Endothelial cell of umbilical vein (primary cell): ENCODE measurements at regions of chr1 and their contacts with region 1.

Region 1: DNA sequence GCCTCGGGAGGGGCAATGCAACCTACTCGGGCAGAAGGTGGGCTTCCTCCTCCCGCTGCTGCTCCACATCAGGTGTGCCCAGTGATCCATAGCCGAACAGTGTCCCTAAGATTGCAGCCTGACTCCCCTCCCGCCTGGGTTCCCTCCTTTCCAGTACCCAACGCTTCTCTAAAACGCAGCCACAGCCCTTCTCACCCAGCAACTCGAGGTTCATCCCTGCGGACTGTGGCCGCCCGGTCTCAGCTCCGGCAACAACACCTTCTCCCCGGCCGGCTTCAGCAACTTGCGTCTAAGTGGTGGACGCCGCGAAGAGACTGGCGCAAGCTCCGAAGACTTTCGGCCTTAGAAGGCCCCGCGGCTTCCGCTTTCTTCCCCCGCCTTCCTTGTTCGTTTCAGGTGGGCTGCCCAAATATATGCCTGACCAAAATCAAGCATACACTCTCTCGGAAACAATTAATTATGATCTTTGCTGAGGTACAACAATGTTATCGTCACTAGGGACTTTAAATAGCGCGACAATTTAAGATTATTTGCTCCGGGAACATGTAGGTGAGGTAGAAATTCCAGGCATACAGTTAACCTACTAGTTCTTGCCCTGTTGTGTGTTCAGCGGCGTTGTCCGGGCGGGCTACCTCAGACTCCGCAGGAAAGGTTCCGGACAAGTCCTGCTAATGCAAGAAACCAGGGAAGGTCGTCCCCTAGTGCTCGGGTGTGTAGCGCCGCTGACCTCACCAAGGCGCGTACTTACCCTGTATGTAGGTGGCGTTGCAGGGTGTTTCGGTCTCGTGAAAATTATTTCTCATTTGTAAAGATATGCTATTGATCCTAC is at the start of gene RBBP5:
- DNase-seq: peak; percentile 98
- H3K4me3 ChIP-seq: peak within 1 kb of the TSS; percentile 52 to 90 (median 72)
- H3K27ac ChIP-seq: peak within 1 kb of the TSS; percentile 91
- H3K4me1 ChIP-seq: peaks cover 12% of the 10 kb centered on the region
- H3K27me3 ChIP-seq: no peaks in the 10 kb centered on the region
- CTCF ChIP-seq: peak; percentile 71 to 77
- POLR2A ChIP-seq: peak; percentile 85
- total RNA-seq, gene RBBP5: 14.2 and 15.6 TPM in 2 replicates

Region 2: DNA sequence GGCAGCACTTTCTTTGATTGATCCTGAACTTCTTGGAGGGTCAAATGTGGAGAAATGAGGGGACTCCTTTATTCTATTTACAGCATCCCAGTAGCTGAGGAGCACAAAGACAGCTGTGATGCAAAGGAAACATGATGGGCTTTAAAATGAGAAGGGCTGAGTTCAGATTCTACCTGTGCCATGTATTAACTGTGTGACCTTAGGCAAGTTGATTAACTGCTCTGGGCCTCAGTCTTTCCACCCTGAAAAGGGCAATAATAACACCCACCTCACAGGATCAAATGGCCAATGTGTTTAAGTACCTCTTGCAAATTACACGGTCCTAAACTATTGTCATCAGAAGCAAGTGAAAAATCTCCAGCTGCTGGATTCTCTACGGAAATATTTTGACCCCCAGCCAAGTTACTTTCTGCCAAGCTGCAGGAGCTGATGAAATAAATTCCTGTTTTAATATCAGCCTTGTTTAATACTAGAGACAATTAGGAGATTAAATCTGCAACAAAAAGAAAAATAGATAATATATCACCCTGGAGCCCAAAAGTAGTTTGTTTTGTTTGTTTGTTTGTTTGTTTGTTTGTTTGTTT is 53.3 kb before region 1 on chr1:
- CTCF ChIA-PET with region 1: no interaction called
- POLR2A ChIA-PET with region 1: no interaction called
- dilution Hi-C with region 1: no loop called
- intact Hi-C with region 1: no loop called
- DNase-seq: no peak
- H3K4me3 ChIP-seq: no peak overlapping the region
- H3K27ac ChIP-seq: no peak overlapping the region
- H3K4me1 ChIP-seq: no peaks in the 10 kb centered on the region
- H3K27me3 ChIP-seq: no peaks in the 10 kb centered on the region
- CTCF ChIP-seq: no peak
- POLR2A ChIP-seq: no peak

Region 3: GRCh38 chr1:205172729-205173366 is 51.0 kb after region 1 on chr1:
- CTCF ChIA-PET with region 1: interaction called, 3 read pairs
- POLR2A ChIA-PET with region 1: no interaction called
- dilution Hi-C with region 1: no loop called
- intact Hi-C with region 1: loop called (anchors 1 kb)
- DNase-seq: peak; percentile 61
- H3K4me3 ChIP-seq: no peak overlapping the region
- H3K27ac ChIP-seq: no peak overlapping the region
- H3K4me1 ChIP-seq: peaks cover 14% of the 10 kb centered on the region
- H3K27me3 ChIP-seq: no peaks in the 10 kb centered on the region
- CTCF ChIP-seq: no peak
- POLR2A ChIP-seq: no peak

Region 4: DNA sequence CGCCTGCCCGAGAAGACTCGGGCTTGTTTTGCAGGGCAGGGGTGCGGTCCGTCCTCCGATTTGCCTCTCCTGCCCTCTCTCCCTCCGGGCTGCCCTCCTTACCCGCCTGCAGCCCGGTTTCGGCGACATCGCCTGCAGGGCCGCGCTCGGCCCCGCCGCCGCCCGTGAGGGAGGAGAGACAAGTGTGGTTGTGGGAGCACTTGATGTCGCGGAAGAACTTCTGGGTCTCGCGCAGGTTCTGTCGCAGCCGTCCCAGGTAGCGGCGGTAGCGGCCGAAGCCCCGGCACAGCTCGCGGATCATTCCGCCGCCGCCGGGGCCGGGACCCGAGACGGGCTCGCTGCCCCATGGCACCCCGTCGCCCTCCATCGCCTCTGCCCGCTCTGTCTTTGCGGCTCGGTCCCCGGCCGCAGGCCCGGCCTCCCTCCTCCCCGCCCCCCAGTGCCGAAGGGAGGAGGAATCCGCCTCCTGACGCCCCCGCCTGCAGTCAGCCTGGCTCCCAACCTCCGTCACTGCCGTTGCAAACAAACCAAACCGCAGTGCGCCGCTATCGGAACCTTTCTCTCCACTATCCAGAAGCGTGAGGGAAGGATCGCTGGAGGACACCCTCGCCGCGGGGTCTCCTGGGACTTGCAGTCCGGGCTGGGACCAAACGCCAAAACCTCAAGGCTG is 89.4 kb after region 1 on chr1 and contains the start of gene DSTYK:
- CTCF ChIA-PET with region 1: no interaction called
- POLR2A ChIA-PET with region 1: no interaction called
- dilution Hi-C with region 1: no loop called
- intact Hi-C with region 1: loop called (anchors 1 kb)
- DNase-seq: peak; percentile 95
- H3K4me3 ChIP-seq: peak within 1 kb of the TSS; percentile 81 to 90 (median 89)
- H3K27ac ChIP-seq: peak within 1 kb of the TSS; percentile 14
- H3K4me1 ChIP-seq: peaks cover 7% of the 10 kb centered on the region
- H3K27me3 ChIP-seq: peaks cover 9 to 15% of the 10 kb centered on the region in 2 experiments
- CTCF ChIP-seq: no peak
- POLR2A ChIP-seq: peak; percentile 54
- total RNA-seq, gene DSTYK: 8.1 and 8.7 TPM in 2 replicates

Region 5: DNA sequence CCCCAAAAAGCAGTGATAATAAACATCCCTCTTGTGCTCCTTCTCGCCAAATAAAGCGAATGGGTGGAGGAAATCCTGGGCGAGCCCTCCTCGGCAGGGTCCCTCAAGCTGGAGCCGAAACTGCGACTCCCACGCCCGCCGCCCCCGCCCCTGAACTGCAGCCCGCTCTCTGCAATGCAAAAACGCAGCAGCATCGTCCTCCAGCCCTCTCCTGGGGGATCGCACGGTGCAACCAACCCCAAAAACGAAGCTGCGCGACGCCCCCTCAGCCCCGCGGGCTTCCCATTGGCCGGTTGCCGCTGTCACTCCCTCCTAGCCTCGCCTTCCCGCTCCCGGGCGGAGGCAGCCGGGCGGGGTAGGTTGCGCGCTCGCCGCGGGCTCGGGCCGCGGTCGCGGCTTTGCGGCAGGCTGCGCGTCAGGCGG is 105.7 kb after region 1 on chr1 and contains the start of gene TMCC2:
- CTCF ChIA-PET with region 1: interaction called, 14 read pairs
- POLR2A ChIA-PET with region 1: no interaction called
- dilution Hi-C with region 1: no loop called
- intact Hi-C with region 1: loop called (anchors 1 kb)
- DNase-seq: peak; percentile 81
- H3K4me3 ChIP-seq: peak within 1 kb of the TSS; percentile 49 to 64 (median 60)
- H3K27ac ChIP-seq: no peak within 1 kb of the TSS
- H3K4me1 ChIP-seq: peaks cover 17% of the 10 kb centered on the region
- H3K27me3 ChIP-seq: peaks cover 17 to 36% of the 10 kb centered on the region in 2 experiments
- CTCF ChIP-seq: peak in 1 of 2 donors; percentile 6
- POLR2A ChIP-seq: no peak
- total RNA-seq, gene TMCC2: 2.0 and 2.1 TPM in 2 replicates

Region 6: GRCh38 chr1:205300886-205301821 is 179.3 kb after region 1 on chr1:
- CTCF ChIA-PET with region 1: no interaction called
- POLR2A ChIA-PET with region 1: no interaction called
- dilution Hi-C with region 1: no loop called
- intact Hi-C with region 1: no loop called
- DNase-seq: peak; percentile 62
- H3K4me3 ChIP-seq: no peak overlapping the region
- H3K27ac ChIP-seq: no peak overlapping the region
- H3K4me1 ChIP-seq: peaks cover 17% of the 10 kb centered on the region
- H3K27me3 ChIP-seq: no peaks in the 10 kb centered on the region
- CTCF ChIP-seq: no peak
- POLR2A ChIP-seq: no peak

Region 7: DNA sequence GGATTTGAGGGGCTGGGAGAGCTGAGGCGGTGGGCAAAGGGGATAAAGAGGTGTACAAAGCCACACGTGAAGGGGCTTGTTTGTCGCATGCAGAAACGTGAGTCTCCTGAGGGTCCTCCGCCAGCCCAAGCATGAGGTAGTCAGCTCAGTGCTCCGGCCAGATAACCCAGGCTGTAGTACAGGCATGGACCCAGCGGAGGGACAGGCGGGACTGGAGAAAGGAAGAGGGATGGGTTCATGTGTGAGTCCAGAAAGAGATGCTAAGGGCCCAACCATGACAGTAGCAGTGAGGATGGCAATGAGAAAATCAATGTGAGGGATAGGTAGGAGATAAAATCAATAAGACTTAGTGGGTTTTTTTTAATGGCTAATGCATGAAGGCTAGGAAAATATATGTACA is 523.6 kb after region 1 on chr1:
- CTCF ChIA-PET with region 1: no interaction called
- POLR2A ChIA-PET with region 1: no interaction called
- dilution Hi-C with region 1: no loop called
- intact Hi-C with region 1: no loop called
- DNase-seq: no peak
- H3K4me3 ChIP-seq: no peak overlapping the region
- H3K27ac ChIP-seq: no peak overlapping the region
- H3K4me1 ChIP-seq: no peaks in the 10 kb centered on the region
- H3K27me3 ChIP-seq: no peaks in the 10 kb centered on the region
- CTCF ChIP-seq: no peak
- POLR2A ChIP-seq: no peak

Region 8: DNA sequence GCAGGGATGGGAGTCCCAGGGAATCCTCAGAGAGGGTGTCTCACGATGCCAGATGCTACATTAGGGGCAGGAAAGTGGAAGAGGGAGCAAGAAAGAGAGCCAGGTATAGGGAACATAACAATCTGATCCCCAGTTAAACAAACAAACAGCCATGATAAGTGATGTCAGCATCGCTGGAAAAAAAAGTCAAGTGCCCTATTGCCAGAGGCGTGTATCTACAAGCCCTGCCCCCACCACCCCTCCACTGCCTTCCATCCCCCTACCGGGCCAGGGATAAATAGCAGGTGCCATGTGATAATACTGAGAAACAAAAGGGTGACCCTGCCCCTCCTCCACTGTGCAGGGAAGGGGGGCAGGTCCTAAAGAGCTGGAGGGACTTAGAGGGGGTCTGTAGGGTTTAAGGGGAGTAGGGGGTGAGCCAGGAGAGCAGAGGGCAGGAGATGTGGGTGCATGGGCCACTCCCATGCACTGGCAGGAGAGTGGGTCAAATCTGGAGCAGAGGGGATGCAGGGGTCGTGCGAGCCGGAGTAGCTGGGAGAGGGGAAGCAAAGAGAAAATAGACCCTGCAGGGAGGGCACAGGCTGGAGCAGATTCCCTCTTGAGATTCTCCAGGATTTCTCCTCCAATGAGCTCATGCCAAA is 817.9 kb after region 1 on chr1:
- CTCF ChIA-PET with region 1: no interaction called
- POLR2A ChIA-PET with region 1: no interaction called
- dilution Hi-C with region 1: no loop called
- intact Hi-C with region 1: no loop called
- DNase-seq: no peak
- H3K4me3 ChIP-seq: no peak overlapping the region
- H3K27ac ChIP-seq: no peak overlapping the region
- H3K4me1 ChIP-seq: peaks cover 14% of the 10 kb centered on the region
- H3K27me3 ChIP-seq: peaks cover 5 to 10% of the 10 kb centered on the region in 2 experiments
- CTCF ChIP-seq: peak in 1 of 2 donors; percentile 35
- POLR2A ChIP-seq: no peak